ENCODE measurements at regions of chr22 and their contacts with region 1.

Region 1: GRCh38 chr22:21001560-21002325 is at the start of gene THAP7:
- DNase-seq: peak; percentile 91
- ATAC-seq: peak; percentile 95
- H3K4me3 ChIP-seq: peak within 1 kb of the TSS; percentile 80
- H3K27ac ChIP-seq: peak within 1 kb of the TSS; percentile 96
- H3K4me1 ChIP-seq: peaks cover 5% of the 10 kb centered on the region
- H3K27me3 ChIP-seq: no peaks in the 10 kb centered on the region
- CTCF ChIP-seq: no peak
- EP300 ChIP-seq: no peak
- POLR2A ChIP-seq: peak; percentile 94
- RAD21 ChIP-seq: no peak
- polyA plus RNA-seq, gene THAP7: 0.66 to 6.9 TPM

Region 2: GRCh38 chr22:20090348-20091240 is 911.1 kb before region 1 on chr22:
- CTCF ChIA-PET with region 1: no interaction called
- POLR2A ChIA-PET with region 1: no interaction called
- RAD21 ChIA-PET with region 1: no interaction called
- SMC1A ChIA-PET with region 1: no interaction called
- in situ Hi-C with region 1: no loop called
- intact Hi-C with region 1: no loop called
- DNase-seq: no peak
- ATAC-seq: no peak
- H3K4me3 ChIP-seq: no peak overlapping the region
- H3K27ac ChIP-seq: no peak overlapping the region
- H3K4me1 ChIP-seq: no peaks in the 10 kb centered on the region
- H3K27me3 ChIP-seq: no peaks in the 10 kb centered on the region
- CTCF ChIP-seq: no peak
- EP300 ChIP-seq: no peak
- POLR2A ChIP-seq: no peak
- RAD21 ChIP-seq: no peak

Region 3: GRCh38 chr22:20916983-20917810 is 84.5 kb before region 1 on chr22 and contains the start of gene CRKL:
- CTCF ChIA-PET with region 1: interaction called, 8 read pairs
- POLR2A ChIA-PET with region 1: interaction called, 6 read pairs
- RAD21 ChIA-PET with region 1: interaction called, 3 read pairs
- SMC1A ChIA-PET with region 1: no interaction called
- in situ Hi-C with region 1: no loop called
- intact Hi-C with region 1: loop called (anchors 1 kb)
- DNase-seq: peak; percentile 83
- ATAC-seq: peak; percentile 96
- H3K4me3 ChIP-seq: peak within 1 kb of the TSS; percentile 92
- H3K27ac ChIP-seq: peak within 1 kb of the TSS; percentile 85
- H3K4me1 ChIP-seq: peaks cover 2% of the 10 kb centered on the region
- H3K27me3 ChIP-seq: no peaks in the 10 kb centered on the region
- CTCF ChIP-seq: peak; percentile 92 to 96 (median 94); a peak in 5 of 6 replicates
- EP300 ChIP-seq: peak in 1 of 2 experiments; percentile 23; a peak in 1 of 4 replicates
- POLR2A ChIP-seq: peak; percentile 91
- RAD21 ChIP-seq: peak; percentile 32; the same call in 1 of the 2 replicates
- polyA plus RNA-seq, gene CRKL: 12.6 to 17.1 TPM

Region 4: GRCh38 chr22:20948450-20948849 is 53.3 kb before region 1 on chr22:
- CTCF ChIA-PET with region 1: no interaction called
- POLR2A ChIA-PET with region 1: no interaction called
- RAD21 ChIA-PET with region 1: no interaction called
- SMC1A ChIA-PET with region 1: no interaction called
- in situ Hi-C with region 1: no loop called
- intact Hi-C with region 1: no loop called
- DNase-seq: no peak
- ATAC-seq: no peak
- H3K4me3 ChIP-seq: no peak overlapping the region
- H3K27ac ChIP-seq: no peak overlapping the region
- H3K4me1 ChIP-seq: no peaks in the 10 kb centered on the region
- H3K27me3 ChIP-seq: no peaks in the 10 kb centered on the region
- CTCF ChIP-seq: no peak
- EP300 ChIP-seq: no peak
- POLR2A ChIP-seq: no peak
- RAD21 ChIP-seq: no peak

Region 5: GRCh38 chr22:20981787-20982562 is 19.8 kb before region 1 on chr22 and contains the start of gene LZTR1:
- CTCF ChIA-PET with region 1: interaction called, 11 read pairs
- POLR2A ChIA-PET with region 1: interaction called, 9 read pairs
- RAD21 ChIA-PET with region 1: interaction called, 4 read pairs
- SMC1A ChIA-PET with region 1: interaction called, 4 read pairs
- in situ Hi-C with region 1: no loop called
- intact Hi-C with region 1: no loop called
- DNase-seq: peak; percentile 32
- ATAC-seq: peak; percentile 95
- H3K4me3 ChIP-seq: peak within 1 kb of the TSS; percentile 94
- H3K27ac ChIP-seq: peak within 1 kb of the TSS; percentile 82
- H3K4me1 ChIP-seq: peaks cover 10% of the 10 kb centered on the region; the same call in 1 of the 2 replicates
- H3K27me3 ChIP-seq: no peaks in the 10 kb centered on the region
- CTCF ChIP-seq: peak; percentile 61 to 84 (median 66)
- EP300 ChIP-seq: no peak
- POLR2A ChIP-seq: peak; percentile 99
- RAD21 ChIP-seq: no peak; the same call in 1 of the 2 replicates
- polyA plus RNA-seq, gene LZTR1: 0.82 to 1.1 TPM

Region 6: DNA sequence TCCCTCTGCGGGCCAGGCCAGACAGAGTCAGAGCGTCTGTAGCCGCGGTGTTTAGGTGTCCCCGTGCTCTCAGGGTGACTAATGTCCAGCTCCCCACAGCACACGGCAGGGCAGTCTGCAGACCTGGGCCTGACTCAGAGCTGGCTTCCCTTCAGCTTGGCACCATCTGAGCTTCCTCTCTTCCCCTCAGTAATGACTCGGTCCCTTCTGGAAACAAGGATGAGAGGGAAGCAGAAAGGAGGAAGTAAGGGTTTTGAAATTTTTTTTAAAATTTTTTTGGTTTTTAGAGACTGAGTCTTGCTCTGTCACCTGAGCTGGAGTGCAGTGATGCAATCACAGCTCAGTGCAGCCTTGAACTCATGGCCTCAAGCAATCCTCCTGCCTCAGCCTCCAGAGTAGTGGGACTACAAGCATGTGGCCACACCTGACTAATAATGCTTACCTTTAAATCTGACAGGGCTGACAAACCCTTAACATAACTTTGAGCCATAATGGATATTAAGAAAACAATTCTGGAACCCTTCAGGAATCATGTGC is 72.5 kb after region 1 on chr22:
- CTCF ChIA-PET with region 1: no interaction called
- POLR2A ChIA-PET with region 1: no interaction called
- RAD21 ChIA-PET with region 1: no interaction called
- SMC1A ChIA-PET with region 1: no interaction called
- in situ Hi-C with region 1: no loop called
- intact Hi-C with region 1: no loop called
- DNase-seq: no peak
- ATAC-seq: no peak
- H3K4me3 ChIP-seq: no peak overlapping the region
- H3K27ac ChIP-seq: no peak overlapping the region
- H3K4me1 ChIP-seq: no peaks in the 10 kb centered on the region
- H3K27me3 ChIP-seq: no peaks in the 10 kb centered on the region; a peak in 1 of 4 replicates
- CTCF ChIP-seq: no peak
- EP300 ChIP-seq: no peak
- POLR2A ChIP-seq: no peak
- RAD21 ChIP-seq: no peak

Measured in GM12878 (cell line).